Activated CD4-positive, alpha-beta T cell treated with anti-CD3 and anti-CD28 coated beads, Interleukin-2, amount 10 ng/mL, durations not matched to agents 24 days and 14 days (primary cell): ENCODE measurements at regions of chr7 and their contacts with region 1.

Region 1: GRCh38 chr7:17298207-17298839 is at the start of gene AHR:
- DNase-seq: peak; percentile 90
- H3K4me3 Mint-ChIP-seq: peak within 1 kb of the TSS; percentile 96
- H3K27ac Mint-ChIP-seq: peak within 1 kb of the TSS; percentile 97
- H3K4me1 Mint-ChIP-seq: peaks cover 23% of the 10 kb centered on the region
- H3K27me3 Mint-ChIP-seq: peaks cover 2% of the 10 kb centered on the region
- total RNA-seq, gene AHR: 28.2 and 30.7 TPM in 2 replicates

Region 2: GRCh38 chr7:16645593-16646471 is 652.5 kb before region 1 on chr7 and contains the starts of genes ANKMY2 and BZW2:
- intact Hi-C with region 1: loop called (anchors 5 kb)
- DNase-seq: peak; percentile 98
- H3K4me3 Mint-ChIP-seq: peak within 1 kb of the TSS; percentile 93
- H3K27ac Mint-ChIP-seq: peak within 1 kb of the TSS; percentile 99
- H3K4me1 Mint-ChIP-seq: peaks cover 54% of the 10 kb centered on the region
- H3K27me3 Mint-ChIP-seq: no peaks in the 10 kb centered on the region
- total RNA-seq, gene ANKMY2: 8.0 and 8.7 TPM in 2 replicates
- total RNA-seq, gene BZW2: 104 and 113 TPM in 2 replicates

Region 3: GRCh38 chr7:17063045-17063383 is 235.3 kb before region 1 on chr7:
- intact Hi-C with region 1: loop called (anchors 2 kb)
- DNase-seq: no peak
- H3K4me3 Mint-ChIP-seq: no peak overlapping the region
- H3K27ac Mint-ChIP-seq: no peak overlapping the region
- H3K4me1 Mint-ChIP-seq: peaks cover 10% of the 10 kb centered on the region
- H3K27me3 Mint-ChIP-seq: no peaks in the 10 kb centered on the region

Region 4: DNA sequence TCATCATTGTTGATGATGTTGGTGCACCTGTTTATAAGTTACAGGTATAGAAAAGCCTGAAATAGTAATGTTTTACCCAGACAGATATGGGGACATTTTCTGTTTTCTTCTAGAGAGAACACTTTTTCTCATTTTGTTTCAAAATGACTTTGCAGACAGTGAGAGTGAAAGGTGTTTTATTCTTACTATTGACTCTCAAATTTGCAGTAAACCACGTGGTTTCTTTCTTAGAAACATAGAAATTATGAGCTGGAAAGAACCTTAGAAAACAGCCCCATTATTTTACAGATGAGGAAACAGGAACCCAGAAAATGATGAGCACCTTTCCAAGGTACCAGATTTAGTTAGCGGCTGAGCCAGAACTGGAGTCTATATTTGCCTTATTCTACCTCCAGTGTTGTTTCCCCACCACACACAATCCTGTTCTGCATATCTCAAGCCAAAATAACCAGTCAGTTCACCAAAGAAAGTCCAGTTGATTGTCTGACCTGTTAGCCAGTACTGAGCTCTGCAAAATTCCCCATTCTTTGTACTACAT is 138.8 kb before region 1 on chr7:
- intact Hi-C with region 1: loop called (anchors 2 kb)
- DNase-seq: peak; percentile 66
- H3K4me3 Mint-ChIP-seq: peak overlapping the region; percentile 2
- H3K27ac Mint-ChIP-seq: peak overlapping the region; percentile 78
- H3K4me1 Mint-ChIP-seq: peaks cover 37% of the 10 kb centered on the region
- H3K27me3 Mint-ChIP-seq: peaks cover 13% of the 10 kb centered on the region

Region 5: DNA sequence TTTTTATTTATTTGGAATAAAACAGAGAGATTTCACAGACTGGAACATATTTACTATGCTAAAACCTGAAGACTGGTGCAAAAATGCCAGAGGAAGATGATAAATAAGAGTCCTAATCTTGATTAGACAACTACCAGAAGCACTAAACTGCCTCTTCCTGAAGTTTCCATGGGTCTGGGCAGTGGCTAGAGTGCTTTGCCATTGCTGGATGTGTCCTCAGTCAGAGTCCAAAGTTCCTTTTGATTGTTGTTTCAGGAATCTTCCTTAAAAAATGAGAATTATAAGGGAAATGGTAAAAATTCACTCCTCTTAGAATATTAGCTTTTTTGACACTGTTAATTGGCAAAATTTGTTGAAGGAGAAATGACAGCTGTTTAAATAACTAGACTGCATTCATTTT is 86.1 kb before region 1 on chr7:
- intact Hi-C with region 1: no loop called
- DNase-seq: no peak
- H3K4me3 Mint-ChIP-seq: no peak overlapping the region
- H3K27ac Mint-ChIP-seq: no peak overlapping the region
- H3K4me1 Mint-ChIP-seq: peaks cover 1% of the 10 kb centered on the region
- H3K27me3 Mint-ChIP-seq: no peaks in the 10 kb centered on the region

Region 6: DNA sequence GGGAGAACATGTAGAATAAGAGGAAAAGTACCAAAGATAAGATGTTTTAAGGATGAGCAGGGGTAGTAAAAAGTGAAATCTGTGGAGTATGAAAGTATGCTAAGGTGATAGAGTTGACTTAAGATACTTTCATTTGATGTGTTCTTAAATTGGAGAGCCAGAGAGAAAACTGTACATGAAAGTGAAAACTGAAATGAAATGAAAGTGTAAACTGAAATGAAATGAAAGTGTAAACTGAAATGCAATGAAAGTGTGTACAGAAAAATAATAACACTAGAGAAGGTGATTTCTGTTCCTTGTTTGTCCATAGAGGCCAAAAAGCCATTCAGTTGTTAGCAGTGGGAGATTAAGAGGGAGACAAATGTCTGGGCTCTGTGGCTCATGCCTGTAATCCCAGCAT is 17.7 kb after region 1 on chr7:
- intact Hi-C with region 1: loop called (anchors 2 kb)
- DNase-seq: no peak
- H3K4me3 Mint-ChIP-seq: no peak overlapping the region
- H3K27ac Mint-ChIP-seq: peak overlapping the region; percentile 17
- H3K4me1 Mint-ChIP-seq: peaks cover 14% of the 10 kb centered on the region
- H3K27me3 Mint-ChIP-seq: no peaks in the 10 kb centered on the region

Region 7: DNA sequence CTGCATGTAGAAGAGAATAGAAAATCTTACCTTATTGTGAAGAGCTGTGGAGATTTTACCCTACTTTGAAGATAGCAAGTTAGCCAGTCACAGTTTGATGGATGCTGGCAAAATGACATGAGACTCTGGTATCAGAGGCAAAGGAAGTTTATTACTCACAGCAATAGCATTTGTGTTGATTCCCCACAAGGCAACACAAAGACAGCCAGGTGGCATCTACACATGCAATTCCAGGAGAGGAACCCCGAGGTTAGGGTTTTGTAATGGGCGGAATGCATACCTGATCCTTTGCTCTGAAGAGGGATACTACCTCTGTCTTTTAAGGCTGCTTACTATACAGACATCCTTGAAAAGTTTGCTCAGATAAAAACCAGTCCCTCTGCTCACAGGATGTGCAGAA is 59.6 kb after region 1 on chr7:
- intact Hi-C with region 1: no loop called
- DNase-seq: no peak
- H3K4me3 Mint-ChIP-seq: no peak overlapping the region
- H3K27ac Mint-ChIP-seq: no peak overlapping the region
- H3K4me1 Mint-ChIP-seq: peaks cover 2% of the 10 kb centered on the region
- H3K27me3 Mint-ChIP-seq: no peaks in the 10 kb centered on the region